MCF 10A (cell line): ENCODE measurements at regions of chr4 and their contacts with region 1.

Region 1: DNA sequence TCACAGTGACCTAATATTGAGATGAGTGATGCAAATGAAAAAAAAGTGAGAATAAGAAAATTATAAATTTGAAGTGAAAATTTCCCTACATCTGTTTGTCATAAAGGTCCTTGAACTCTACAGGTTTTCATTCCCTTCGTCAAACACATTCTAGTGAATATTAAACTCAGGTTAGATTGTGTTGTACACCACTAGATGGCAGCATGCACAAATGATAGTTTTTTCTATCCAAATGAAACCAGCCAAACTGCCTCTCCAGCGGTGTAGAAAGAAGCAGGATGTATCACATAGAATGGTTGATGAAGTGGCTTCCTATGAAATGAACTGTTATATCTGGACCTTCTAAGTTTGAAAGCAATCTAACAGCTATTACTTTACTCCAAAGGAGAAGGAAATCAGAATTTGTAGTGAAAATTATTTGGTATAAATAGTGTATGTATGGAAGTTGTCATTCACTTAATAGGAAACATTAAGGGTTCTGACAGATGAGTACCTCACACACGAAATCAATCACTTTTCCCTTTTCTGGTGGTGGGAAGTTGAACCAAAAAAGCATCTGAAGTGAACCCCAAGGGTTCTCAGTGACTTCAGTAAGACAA is 382.7 kb downstream of the UNC5C start:
- DNase-seq: peak; percentile 74
- H3K4me3 Mint-ChIP-seq: no peak overlapping the region
- H3K27ac Mint-ChIP-seq: no peak overlapping the region
- H3K4me1 Mint-ChIP-seq: no peaks in the 10 kb centered on the region
- H3K27me3 Mint-ChIP-seq: no peaks in the 10 kb centered on the region
- CTCF ChIP-seq: peak; percentile 66

Region 2: DNA sequence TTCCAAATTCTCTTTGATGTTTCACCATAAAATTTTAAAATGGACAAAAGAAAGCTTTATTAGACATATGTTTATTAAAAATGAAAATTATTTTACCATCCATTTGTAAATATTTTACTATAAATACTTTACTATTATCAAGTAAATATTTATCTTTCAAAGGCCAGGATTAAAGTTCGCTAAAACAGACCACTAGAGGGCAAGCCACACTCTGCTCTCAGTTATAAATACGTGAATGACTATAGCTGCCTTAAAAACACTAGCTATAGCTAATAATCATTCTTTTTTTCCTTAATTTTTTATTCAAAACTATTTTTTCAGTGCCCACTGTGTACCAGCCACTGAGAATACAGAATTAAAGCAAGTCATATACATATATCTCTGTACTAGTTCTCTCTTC is 344.1 kb after region 1 on chr4:
- CTCF ChIA-PET with region 1: interaction called, 5 read pairs
- POLR2A ChIA-PET with region 1: no interaction called
- intact Hi-C with region 1: loop called (anchors 2 kb)
- DNase-seq: peak; percentile 46
- H3K4me3 Mint-ChIP-seq: no peak overlapping the region
- H3K27ac Mint-ChIP-seq: no peak overlapping the region
- H3K4me1 Mint-ChIP-seq: peaks cover 17% of the 10 kb centered on the region
- H3K27me3 Mint-ChIP-seq: no peaks in the 10 kb centered on the region
- CTCF ChIP-seq: peak; percentile 59

Region 3: DNA sequence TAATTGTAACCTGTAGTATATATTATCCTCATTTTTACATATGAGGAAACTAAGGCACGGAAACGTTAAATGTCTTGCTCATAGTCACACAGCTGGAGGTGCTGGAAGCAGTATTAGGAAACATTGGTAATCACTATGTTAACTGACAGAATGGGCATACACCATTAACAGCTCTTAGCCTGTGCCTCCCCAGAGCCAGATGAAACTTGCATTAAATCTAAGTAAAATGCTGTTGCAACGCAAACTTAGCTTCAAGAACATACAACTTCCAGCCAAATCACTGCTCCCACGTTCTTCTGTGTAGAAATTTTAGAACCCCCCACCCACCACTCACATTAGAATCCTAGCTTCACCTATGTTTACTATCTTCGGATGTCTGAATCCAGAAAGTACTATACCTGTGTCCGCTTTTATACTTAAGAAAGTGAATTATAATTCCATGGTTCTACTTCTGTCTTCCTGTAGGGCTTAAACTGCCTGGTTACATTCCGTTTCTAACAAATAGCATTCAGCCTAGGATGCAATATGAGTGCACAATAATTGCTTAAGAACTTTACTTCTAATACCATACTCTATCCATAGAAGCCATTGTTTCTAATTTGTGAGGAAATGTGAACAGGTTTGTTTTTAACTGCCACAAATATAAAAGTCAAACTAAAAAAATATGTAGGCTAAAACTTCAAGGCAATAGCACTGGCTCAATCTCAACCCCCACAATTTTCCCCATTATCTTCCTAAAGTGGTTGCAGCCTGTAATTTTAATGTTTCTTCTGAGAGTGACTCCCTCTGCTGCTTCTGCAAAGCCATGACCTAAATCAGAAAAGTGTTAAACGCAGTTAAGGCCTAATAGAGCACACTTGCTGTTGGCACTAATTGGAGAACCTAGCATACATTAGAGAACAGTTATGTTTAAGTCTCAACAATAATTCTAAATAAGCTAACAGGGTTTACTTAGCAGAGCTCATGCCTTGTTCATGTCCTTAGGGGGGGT is 378.4 kb after region 1 on chr4:
- CTCF ChIA-PET with region 1: interaction called, 5 read pairs
- POLR2A ChIA-PET with region 1: no interaction called
- intact Hi-C with region 1: loop called (anchors 2 kb)
- DNase-seq: no peak
- H3K4me3 Mint-ChIP-seq: no peak overlapping the region
- H3K27ac Mint-ChIP-seq: no peak overlapping the region
- H3K4me1 Mint-ChIP-seq: no peaks in the 10 kb centered on the region
- H3K27me3 Mint-ChIP-seq: peaks cover 36% of the 10 kb centered on the region
- CTCF ChIP-seq: no peak

Region 4: GRCh38 chr4:97153042-97153441 is 1987.0 kb after region 1 on chr4:
- CTCF ChIA-PET with region 1: interaction called, 5 read pairs
- POLR2A ChIA-PET with region 1: no interaction called
- intact Hi-C with region 1: loop called (anchors 1 kb)
- DNase-seq: peak; percentile 42
- H3K4me3 Mint-ChIP-seq: no peak overlapping the region
- H3K27ac Mint-ChIP-seq: no peak overlapping the region
- H3K4me1 Mint-ChIP-seq: peaks cover 6% of the 10 kb centered on the region
- H3K27me3 Mint-ChIP-seq: no peaks in the 10 kb centered on the region
- CTCF ChIP-seq: peak; percentile 29